PC-3 (cell line): ENCODE measurements at regions of chr6 and their contacts with region 1.

Region 1: DNA sequence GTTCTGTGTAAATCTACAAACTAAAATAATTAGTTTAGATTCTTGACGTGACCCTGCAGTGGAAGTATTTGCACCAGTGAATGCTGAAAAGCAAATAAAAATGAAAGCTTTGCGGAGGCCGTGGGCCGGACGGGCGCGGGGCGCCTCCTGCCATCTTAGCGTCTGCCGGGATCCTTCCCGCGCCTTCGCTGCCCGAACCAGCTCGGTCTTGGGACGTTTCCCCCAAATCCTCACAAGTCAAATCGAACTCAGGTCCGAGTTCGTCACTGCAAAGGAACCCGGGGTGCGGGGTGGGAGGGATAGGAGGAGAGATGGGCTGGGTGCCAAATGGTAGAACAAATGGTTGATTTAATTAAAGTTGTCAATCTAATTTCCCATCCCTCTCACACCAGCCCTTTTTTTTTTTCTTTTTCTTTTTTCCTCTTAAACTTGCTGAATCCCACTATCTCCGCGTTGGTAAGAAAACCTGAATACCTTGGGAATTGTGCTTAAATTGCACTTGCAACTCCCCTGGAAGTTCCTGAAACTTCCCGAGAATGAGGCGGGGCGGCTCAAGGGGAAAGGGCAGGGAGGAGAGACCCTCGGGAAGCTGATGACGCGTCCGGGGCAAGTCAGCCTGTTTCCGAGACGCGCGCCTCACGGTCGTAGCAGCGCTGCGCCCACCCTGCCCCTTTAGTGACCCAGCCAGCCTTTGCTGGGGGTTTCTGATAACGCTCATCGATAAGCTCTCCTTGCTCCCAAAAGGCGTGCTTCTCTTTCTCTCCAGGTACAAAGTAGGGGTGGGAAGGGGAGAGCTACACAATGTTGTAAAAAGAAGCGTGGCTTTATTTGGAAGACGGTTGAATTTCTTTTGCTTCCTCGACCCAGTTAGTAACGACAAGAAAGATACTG is 1.8 kb downstream of the GJA1 start:
- DNase-seq: peak; percentile 20
- ATAC-seq: peak; percentile 20; the same call in 1 of the 2 replicates
- H3K4me3 ChIP-seq: peak overlapping the region; percentile 75
- H3K27ac ChIP-seq: peak overlapping the region; percentile 54
- H3K4me1 ChIP-seq: no peaks in the 10 kb centered on the region
- H3K27me3 ChIP-seq: peaks cover 26% of the 10 kb centered on the region
- CTCF ChIP-seq: no peak

Region 2: GRCh38 chr6:121482004-121482693 is 44.9 kb after region 1 on chr6:
- CTCF ChIA-PET with region 1: no interaction called
- POLR2A ChIA-PET with region 1: no interaction called
- intact Hi-C with region 1: loop called (anchors 5 kb)
- DNase-seq: peak; percentile 80
- ATAC-seq: peak; percentile 78
- H3K4me3 ChIP-seq: no peak overlapping the region
- H3K27ac ChIP-seq: peak overlapping the region; percentile 16; the same call in 1 of the 2 replicates
- H3K4me1 ChIP-seq: peaks cover 8% of the 10 kb centered on the region
- H3K27me3 ChIP-seq: no peaks in the 10 kb centered on the region
- CTCF ChIP-seq: no peak

Region 3: GRCh38 chr6:121504227-121504626 is 67.0 kb after region 1 on chr6:
- CTCF ChIA-PET with region 1: no interaction called
- POLR2A ChIA-PET with region 1: interaction called, 3 read pairs
- intact Hi-C with region 1: loop called (anchors 5 kb)
- DNase-seq: peak; percentile 66
- ATAC-seq: peak; percentile 92
- H3K4me3 ChIP-seq: no peak overlapping the region
- H3K27ac ChIP-seq: peak overlapping the region; percentile 80
- H3K4me1 ChIP-seq: peaks cover 15% of the 10 kb centered on the region
- H3K27me3 ChIP-seq: no peaks in the 10 kb centered on the region
- CTCF ChIP-seq: no peak

Region 4: GRCh38 chr6:121670511-121670910 is 233.3 kb after region 1 on chr6:
- CTCF ChIA-PET with region 1: no interaction called
- POLR2A ChIA-PET with region 1: no interaction called
- intact Hi-C with region 1: loop called (anchors 5 kb)
- DNase-seq: peak; percentile 51
- ATAC-seq: peak; percentile 56
- H3K4me3 ChIP-seq: no peak overlapping the region
- H3K27ac ChIP-seq: peak overlapping the region; percentile 30; the same call in 1 of the 2 replicates
- H3K4me1 ChIP-seq: peaks cover 34% of the 10 kb centered on the region
- H3K27me3 ChIP-seq: no peaks in the 10 kb centered on the region
- CTCF ChIP-seq: no peak